Sigmoid colon (tissue), 7 donors: ENCODE measurements at regions of chr12 and their contacts with region 1.

Region 1: GRCh38 chr12:124754949-124755800 is 108.5 kb downstream of the SCARB1 start:
- DNase-seq: peak; percentile 98
- H3K4me3 ChIP-seq: no peak overlapping the region
- H3K27ac ChIP-seq: peak overlapping the region; percentile 87 to 97 (median 93)
- H3K4me1 ChIP-seq: peaks cover 0 to 74% (median 54%) of the 10 kb centered on the region in 4 donors
- H3K27me3 ChIP-seq: no peaks in the 10 kb centered on the region
- CTCF ChIP-seq: no peak
- EP300 ChIP-seq: peak in 3 of 4 donors; percentile 92 to 97 (median 96)
- POLR2A ChIP-seq: peak in 1 of 2 donors; percentile 34

Region 2: GRCh38 chr12:124457287-124458219 is 297.6 kb before region 1 on chr12:
- intact Hi-C with region 1: loop called (anchors 5 kb)
- DNase-seq: peak; percentile 95
- H3K4me3 ChIP-seq: peak overlapping the region; percentile 23 to 53 (median 42)
- H3K27ac ChIP-seq: peak overlapping the region; percentile 92 to 97 (median 94)
- H3K4me1 ChIP-seq: peaks cover 0 to 71% (median 67%) of the 10 kb centered on the region in 4 donors
- H3K27me3 ChIP-seq: no peaks in the 10 kb centered on the region
- CTCF ChIP-seq: peak in 1 of 4 experiments; percentile 14
- EP300 ChIP-seq: peak in 2 of 4 donors; percentile 28 to 77
- POLR2A ChIP-seq: peak; percentile 53 to 71

Region 3: GRCh38 chr12:124680863-124681778 is 74.1 kb before region 1 on chr12:
- intact Hi-C with region 1: loop called (anchors 5 kb)
- DNase-seq: no peak
- H3K4me3 ChIP-seq: no peak overlapping the region
- H3K27ac ChIP-seq: peak overlapping the region; percentile 87 to 93 (median 88)
- H3K4me1 ChIP-seq: peaks cover 0 to 92% (median 76%) of the 10 kb centered on the region in 4 donors
- H3K27me3 ChIP-seq: no peaks in the 10 kb centered on the region
- CTCF ChIP-seq: peak in 1 of 4 experiments; percentile 11
- EP300 ChIP-seq: peak in 1 of 4 donors; percentile 25
- POLR2A ChIP-seq: no peak